ENCODE measurements at regions of chr19 and their contacts with region 1.

Region 1: DNA sequence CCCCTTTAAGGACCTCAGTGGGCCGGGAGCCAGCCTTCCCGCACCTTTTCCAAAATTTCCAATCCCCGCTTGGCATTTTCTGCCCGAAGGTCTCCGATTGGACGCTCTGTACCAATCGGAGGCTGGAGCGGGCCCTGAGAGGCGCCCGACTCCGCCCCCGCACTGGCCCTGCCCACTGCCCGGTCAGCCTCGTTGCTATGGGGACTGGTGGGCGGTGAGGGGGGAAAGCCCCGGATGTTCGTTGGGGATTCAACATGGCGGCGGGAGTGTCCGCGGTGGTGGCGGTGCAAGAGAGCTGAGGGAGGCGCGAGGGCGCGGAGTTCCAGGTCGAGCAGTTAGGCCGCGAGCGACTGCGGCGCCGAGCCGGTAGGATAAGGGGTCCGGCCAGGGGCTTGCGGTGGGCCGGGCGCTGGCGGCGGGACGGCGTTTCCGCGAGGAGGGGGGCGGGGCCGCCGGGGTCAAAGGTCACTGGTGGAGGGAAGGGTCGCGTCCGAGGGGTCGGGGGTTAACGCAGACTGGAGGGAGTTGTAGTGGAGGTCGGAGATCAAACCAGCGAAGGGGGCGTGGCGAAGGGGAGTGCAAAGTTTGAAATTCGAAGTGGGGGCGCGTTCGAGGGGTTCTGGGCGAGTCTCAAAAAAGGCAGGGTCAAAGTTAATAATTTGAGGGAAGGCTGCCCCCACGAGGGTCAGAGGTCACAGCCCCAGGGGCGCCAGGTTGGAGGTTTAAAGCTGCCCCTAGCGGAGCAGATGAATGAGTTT is at the start of gene PAK4:
- DNase-seq: peak; percentile 98
- ATAC-seq: peak; percentile 93
- H3K4me3 Mint-ChIP-seq: peak within 1 kb of the TSS; percentile 96
- H3K27ac Mint-ChIP-seq: peak within 1 kb of the TSS; percentile 96
- H3K4me1 Mint-ChIP-seq: peaks cover 34% of the 10 kb centered on the region
- H3K27me3 Mint-ChIP-seq: no peaks in the 10 kb centered on the region
- CTCF ChIP-seq: no peak
- total RNA-seq, gene PAK4: 69.8 to 77.7 TPM (median 73.9 TPM) in 3 replicates

Region 2: DNA sequence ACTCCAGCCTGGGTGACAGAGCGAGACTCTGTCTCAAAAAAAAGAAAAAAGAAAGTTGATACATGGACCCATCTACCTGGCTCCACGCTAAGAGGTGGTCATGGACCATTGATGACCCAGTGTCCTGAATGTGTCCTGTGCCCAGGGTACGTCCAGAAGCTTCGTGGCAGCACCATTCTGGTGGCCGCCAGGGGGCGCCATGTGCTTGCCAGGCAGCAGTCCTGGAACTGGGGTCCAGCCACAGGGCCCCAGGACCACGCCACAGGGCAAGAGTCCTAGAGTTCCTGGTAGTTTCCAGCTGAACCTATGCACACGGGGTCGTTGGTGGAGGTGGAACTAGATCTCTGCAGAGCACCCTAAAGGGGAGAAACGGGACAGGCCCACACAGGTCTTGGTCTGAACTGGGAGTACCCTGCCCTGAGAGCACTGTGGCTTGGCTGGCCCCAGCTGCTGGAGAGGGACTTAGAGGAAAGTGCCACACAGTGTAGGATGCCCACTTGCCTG is 73.4 kb before region 1 on chr19:
- CTCF ChIA-PET with region 1: interaction called, 11 read pairs
- POLR2A ChIA-PET with region 1: no interaction called
- DNase-seq: peak; percentile 83
- ATAC-seq: peak; percentile 98
- H3K4me3 Mint-ChIP-seq: no peak overlapping the region
- H3K27ac Mint-ChIP-seq: no peak overlapping the region
- H3K4me1 Mint-ChIP-seq: no peaks in the 10 kb centered on the region
- H3K27me3 Mint-ChIP-seq: peaks cover 12% of the 10 kb centered on the region
- CTCF ChIP-seq: peak; percentile 96

Region 3: DNA sequence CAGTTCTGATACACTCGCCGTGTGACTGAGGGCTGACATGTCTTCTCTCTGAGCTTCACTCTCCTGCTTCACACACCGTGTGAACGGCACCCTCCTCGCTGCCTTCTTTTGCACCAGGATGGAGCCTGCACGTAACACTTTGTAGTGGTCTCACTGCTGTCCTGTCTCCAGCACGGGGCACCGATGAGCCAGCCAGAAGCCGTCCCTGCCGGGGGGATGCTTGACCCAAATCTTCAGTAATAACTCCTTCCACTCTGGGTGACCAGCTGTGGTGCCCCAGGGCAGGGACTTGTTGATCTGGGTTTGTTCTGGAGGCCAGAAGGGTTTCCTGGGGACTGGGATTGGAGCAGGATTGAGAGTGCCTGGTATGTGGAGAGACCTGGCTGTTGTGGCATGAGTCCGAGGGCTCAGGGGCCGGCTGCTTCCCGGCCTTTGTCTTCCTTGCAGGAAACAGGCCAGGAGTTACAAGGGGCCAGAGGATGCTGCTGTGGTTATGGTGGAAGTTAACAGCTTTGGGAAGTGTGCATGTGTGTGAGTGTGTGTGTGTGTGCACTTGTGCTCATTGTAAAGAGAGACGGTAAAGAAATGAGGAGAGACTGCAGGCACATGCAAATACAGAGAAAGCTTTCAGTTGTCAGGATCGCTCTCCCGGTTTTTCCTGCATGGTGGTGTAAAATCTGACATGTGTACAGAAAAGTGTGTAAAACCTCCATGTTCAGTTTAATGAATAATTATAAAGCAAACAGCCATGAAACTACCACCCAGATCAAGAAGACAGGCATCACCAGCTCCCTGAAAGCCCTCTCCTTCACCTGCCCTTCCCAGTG is 18.7 kb after region 1 on chr19:
- CTCF ChIA-PET with region 1: interaction called, 13 read pairs
- POLR2A ChIA-PET with region 1: no interaction called
- DNase-seq: no peak
- ATAC-seq: peak; percentile 51
- H3K4me3 Mint-ChIP-seq: no peak overlapping the region
- H3K27ac Mint-ChIP-seq: peak overlapping the region; percentile 33
- H3K4me1 Mint-ChIP-seq: peaks cover 68% of the 10 kb centered on the region
- H3K27me3 Mint-ChIP-seq: no peaks in the 10 kb centered on the region
- CTCF ChIP-seq: no peak

Region 4: DNA sequence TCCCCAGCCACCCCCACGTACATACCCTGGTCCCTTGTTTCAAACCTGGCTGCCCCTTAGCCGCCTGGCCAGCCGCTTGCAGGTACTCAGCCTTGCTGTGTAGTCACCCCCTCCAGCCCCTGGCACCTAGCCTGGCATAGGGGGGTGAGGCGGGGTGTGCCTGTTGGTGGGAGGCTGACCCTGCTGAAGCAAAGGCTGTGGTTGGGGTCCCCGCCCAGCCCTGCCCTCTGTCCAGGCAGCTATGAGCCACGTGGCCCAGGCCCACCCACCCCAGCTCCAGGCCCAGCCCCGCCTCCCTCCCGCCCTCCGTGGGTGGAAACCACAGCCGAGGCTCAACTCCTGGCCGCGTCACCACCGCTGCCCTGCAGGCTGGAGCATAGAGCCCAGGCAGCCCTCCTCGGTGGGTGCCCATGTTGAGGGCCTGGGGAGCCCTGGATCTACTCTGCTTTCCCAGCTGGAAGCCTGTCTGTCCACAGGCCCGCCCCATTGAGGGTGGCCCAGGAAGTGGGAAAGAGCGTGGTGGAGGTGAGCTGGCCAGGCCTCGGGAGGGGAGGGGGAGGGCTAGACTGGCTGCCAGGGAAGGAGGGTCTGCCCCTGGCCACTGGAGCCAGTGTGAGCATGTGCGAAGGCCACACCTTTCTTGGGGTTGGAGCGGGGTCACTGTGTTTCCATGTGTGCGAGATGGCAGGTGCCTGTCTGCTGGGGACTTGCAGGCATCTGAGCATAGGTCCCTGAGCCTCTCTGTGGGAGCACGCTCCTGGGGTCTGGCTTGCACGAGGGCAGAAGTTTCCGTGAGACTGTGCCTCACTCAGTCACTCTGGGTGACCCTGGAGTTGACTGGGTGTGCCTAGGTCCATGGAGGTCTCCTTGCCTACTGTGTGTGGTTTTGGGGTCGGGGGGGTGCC is 30.8 kb after region 1 on chr19:
- CTCF ChIA-PET with region 1: interaction called, 12 read pairs
- POLR2A ChIA-PET with region 1: no interaction called
- DNase-seq: no peak
- ATAC-seq: no peak
- H3K4me3 Mint-ChIP-seq: no peak overlapping the region
- H3K27ac Mint-ChIP-seq: no peak overlapping the region
- H3K4me1 Mint-ChIP-seq: peaks cover 40% of the 10 kb centered on the region
- H3K27me3 Mint-ChIP-seq: no peaks in the 10 kb centered on the region; the same call in 1 of the 2 replicates
- CTCF ChIP-seq: no peak

Region 5: GRCh38 chr19:39187559-39187957 is 61.8 kb after region 1 on chr19:
- CTCF ChIA-PET with region 1: interaction called, 22 read pairs
- POLR2A ChIA-PET with region 1: no interaction called
- DNase-seq: no peak
- ATAC-seq: peak; percentile 44
- H3K4me3 Mint-ChIP-seq: no peak overlapping the region
- H3K27ac Mint-ChIP-seq: 0 out of 2 replicates have a peak overlapping the region, but pooled peaks have one; percentile 50
- H3K4me1 Mint-ChIP-seq: no peaks in the 10 kb centered on the region
- H3K27me3 Mint-ChIP-seq: peaks cover 2% of the 10 kb centered on the region; the same call in 1 of the 2 replicates
- CTCF ChIP-seq: no peak; the same call in 1 of the 2 replicates

Region 6: GRCh38 chr19:39199025-39199424 is 73.3 kb after region 1 on chr19:
- CTCF ChIA-PET with region 1: interaction called, 26 read pairs
- POLR2A ChIA-PET with region 1: interaction called, 14 read pairs
- DNase-seq: peak; percentile 42
- ATAC-seq: no peak
- H3K4me3 Mint-ChIP-seq: no peak overlapping the region
- H3K27ac Mint-ChIP-seq: no peak overlapping the region
- H3K4me1 Mint-ChIP-seq: peaks cover 22% of the 10 kb centered on the region
- H3K27me3 Mint-ChIP-seq: peaks cover 73% of the 10 kb centered on the region
- CTCF ChIP-seq: no peak

Region 7: DNA sequence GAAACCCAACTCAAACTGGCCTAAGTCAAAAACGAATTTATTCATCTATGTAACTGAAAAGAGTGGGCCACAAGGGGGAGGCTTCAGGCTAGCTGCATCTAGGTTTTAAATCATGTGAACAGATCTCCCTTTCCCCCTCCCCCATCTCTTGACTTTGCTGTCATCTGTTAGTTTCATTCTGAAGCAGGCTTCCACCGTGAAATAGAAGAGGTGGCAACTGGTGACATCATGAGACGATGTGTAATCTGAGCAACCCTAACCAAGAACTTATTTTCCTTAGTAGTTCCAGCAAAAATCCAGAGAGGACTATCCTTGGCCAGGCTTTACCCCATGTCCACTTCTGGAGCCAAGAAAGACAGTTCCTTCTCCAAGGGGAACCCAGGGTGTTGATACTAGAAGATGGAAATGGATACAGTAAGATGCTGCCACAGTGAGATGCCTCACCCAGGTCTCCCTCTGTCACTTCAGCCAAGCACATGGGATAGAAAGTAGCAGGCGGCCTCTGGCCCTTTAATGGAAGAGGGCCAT is 225.9 kb after region 1 on chr19:
- CTCF ChIA-PET with region 1: interaction called, 11 read pairs
- POLR2A ChIA-PET with region 1: no interaction called
- DNase-seq: no peak
- ATAC-seq: no peak
- H3K4me3 Mint-ChIP-seq: no peak overlapping the region
- H3K27ac Mint-ChIP-seq: no peak overlapping the region
- H3K4me1 Mint-ChIP-seq: no peaks in the 10 kb centered on the region
- H3K27me3 Mint-ChIP-seq: no peaks in the 10 kb centered on the region
- CTCF ChIP-seq: no peak

Measured in WTC11 (cell line).